ENCODE measurements at regions of chr6 and their contacts with region 1.

Region 1: DNA sequence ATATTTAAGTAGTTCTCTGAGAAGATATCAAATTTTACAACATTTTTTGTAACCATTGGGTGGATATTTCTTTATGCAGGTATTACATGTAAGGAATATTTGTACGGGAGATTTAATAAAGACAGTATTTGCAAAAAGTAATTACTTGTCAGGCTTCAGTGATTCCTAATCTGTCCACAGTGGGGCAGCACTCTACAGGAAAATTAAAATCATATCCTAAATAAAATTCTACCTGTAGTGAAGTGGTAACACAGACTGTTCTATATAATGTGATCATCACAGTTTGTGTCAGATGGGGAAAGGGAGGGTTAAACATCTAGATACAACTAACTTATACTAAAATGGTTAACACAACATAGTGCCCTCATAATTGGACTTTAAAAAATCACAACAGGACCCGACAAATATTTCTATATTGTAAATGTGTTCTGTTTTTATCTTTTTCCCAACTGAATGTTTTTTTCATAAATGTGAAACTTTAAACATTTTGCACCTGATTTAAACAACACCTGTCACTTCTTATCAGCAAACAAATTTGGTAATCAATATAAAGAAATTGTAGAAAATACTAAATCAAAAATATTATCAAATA is 145.6 kb upstream of the MANEA start:
- DNase-seq: peak in 6 of 9 donors; percentile 1 to 24 (median 20)
- ATAC-seq: no peak
- H3K4me3 ChIP-seq: no peak overlapping the region
- H3K4me3 Mint-ChIP-seq: no peak overlapping the region
- H3K27ac ChIP-seq: no peak overlapping the region
- H3K27ac Mint-ChIP-seq: no peak overlapping the region
- H3K4me1 ChIP-seq: no peaks in the 10 kb centered on the region
- H3K4me1 Mint-ChIP-seq: no peaks in the 10 kb centered on the region
- H3K27me3 ChIP-seq: peaks cover 0 to under 1% of the 10 kb centered on the region in 2 donors
- H3K27me3 Mint-ChIP-seq: peaks cover 0 to 5% (median 0%) of the 10 kb centered on the region in 5 donors

Region 2: GRCh38 chr6:95577304-95578105 is 145.8 kb after region 1 on chr6 and contains the start of gene MANEA:
- CTCF ChIA-PET with region 1: no interaction called
- POLR2A ChIA-PET with region 1: no interaction called
- intact Hi-C with region 1: loop called in 1 of 2 experiments (anchors 2 kb)
- DNase-seq: peak; percentile 64 to 83 (median 79)
- ATAC-seq: peak; percentile 91
- H3K4me3 ChIP-seq: peak within 1 kb of the TSS; percentile 98
- H3K4me3 Mint-ChIP-seq: peak within 1 kb of the TSS; percentile 83 to 98 (median 96)
- H3K27ac ChIP-seq: peak within 1 kb of the TSS; percentile 80
- H3K27ac Mint-ChIP-seq: peak within 1 kb of the TSS; percentile 92 to 100 (median 97)
- H3K4me1 ChIP-seq: peaks cover 9 to 30% of the 10 kb centered on the region in 2 donors
- H3K4me1 Mint-ChIP-seq: peaks cover 28 to 71% (median 62%) of the 10 kb centered on the region in 7 donors
- H3K27me3 ChIP-seq: no peaks in the 10 kb centered on the region
- H3K27me3 Mint-ChIP-seq: no peaks in the 10 kb centered on the region
- total RNA-seq, gene MANEA: 3.8 to 25.7 (median 12.2) TPM

Region 3: GRCh38 chr6:95819939-95820338 is 388.2 kb after region 1 on chr6:
- CTCF ChIA-PET with region 1: no interaction called
- POLR2A ChIA-PET with region 1: no interaction called
- intact Hi-C with region 1: loop called in 1 of 2 experiments (anchors 5 kb)
- DNase-seq: no peak
- ATAC-seq: no peak
- H3K4me3 ChIP-seq: no peak overlapping the region
- H3K4me3 Mint-ChIP-seq: no peak overlapping the region
- H3K27ac ChIP-seq: no peak overlapping the region
- H3K27ac Mint-ChIP-seq: no peak overlapping the region
- H3K4me1 ChIP-seq: no peaks in the 10 kb centered on the region
- H3K4me1 Mint-ChIP-seq: no peaks in the 10 kb centered on the region
- H3K27me3 ChIP-seq: no peaks in the 10 kb centered on the region
- H3K27me3 Mint-ChIP-seq: peaks cover 0 to 6% (median 0%) of the 10 kb centered on the region in 5 donors

Region 4: DNA sequence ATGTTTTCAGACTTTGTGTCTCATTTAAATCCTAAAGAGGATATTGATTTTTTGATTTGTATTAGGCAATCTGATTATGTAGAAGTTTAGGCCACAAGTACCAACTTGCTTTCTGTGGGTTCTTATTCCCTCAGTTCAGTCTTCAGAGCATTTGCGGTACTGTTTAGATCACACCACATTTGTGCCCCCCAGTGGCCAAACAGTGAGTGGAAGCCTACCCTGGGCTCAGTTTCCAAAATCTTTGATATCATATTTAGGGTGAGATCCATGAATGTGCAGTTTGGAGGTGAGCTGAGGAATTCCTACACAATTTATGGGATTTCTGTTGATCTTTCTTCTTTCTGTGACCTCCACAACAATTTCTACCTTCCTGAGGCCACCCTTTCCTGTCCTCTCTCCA is 491.8 kb after region 1 on chr6:
- CTCF ChIA-PET with region 1: no interaction called
- POLR2A ChIA-PET with region 1: no interaction called
- intact Hi-C with region 1: loop called in 1 of 2 experiments (anchors 1 kb)
- DNase-seq: no peak
- ATAC-seq: no peak
- H3K4me3 ChIP-seq: no peak overlapping the region
- H3K4me3 Mint-ChIP-seq: no peak overlapping the region
- H3K27ac ChIP-seq: no peak overlapping the region
- H3K27ac Mint-ChIP-seq: no peak overlapping the region
- H3K4me1 ChIP-seq: no peaks in the 10 kb centered on the region
- H3K4me1 Mint-ChIP-seq: no peaks in the 10 kb centered on the region
- H3K27me3 ChIP-seq: no peaks in the 10 kb centered on the region
- H3K27me3 Mint-ChIP-seq: no peaks in the 10 kb centered on the region

Region 5: GRCh38 chr6:97059473-97059872 is 1627.7 kb after region 1 on chr6:
- CTCF ChIA-PET with region 1: no interaction called
- POLR2A ChIA-PET with region 1: no interaction called
- intact Hi-C with region 1: loop called (anchors 2 kb)
- DNase-seq: peak in 5 of 9 donors; percentile 25 to 41 (median 29)
- ATAC-seq: peak; percentile 45
- H3K4me3 ChIP-seq: no peak overlapping the region
- H3K4me3 Mint-ChIP-seq: no peak overlapping the region
- H3K27ac ChIP-seq: no peak overlapping the region
- H3K27ac Mint-ChIP-seq: no peak overlapping the region
- H3K4me1 ChIP-seq: no peaks in the 10 kb centered on the region
- H3K4me1 Mint-ChIP-seq: peaks cover 0 to 4% (median 0%) of the 10 kb centered on the region in 7 donors
- H3K27me3 ChIP-seq: no peaks in the 10 kb centered on the region
- H3K27me3 Mint-ChIP-seq: peaks cover 0 to 3% (median 0%) of the 10 kb centered on the region in 5 donors

Measured in naive thymus-derived CD4-positive, alpha-beta T cell (primary cell).